ENCODE measurements at regions of chr3 and their contacts with region 1.

Region 1: DNA sequence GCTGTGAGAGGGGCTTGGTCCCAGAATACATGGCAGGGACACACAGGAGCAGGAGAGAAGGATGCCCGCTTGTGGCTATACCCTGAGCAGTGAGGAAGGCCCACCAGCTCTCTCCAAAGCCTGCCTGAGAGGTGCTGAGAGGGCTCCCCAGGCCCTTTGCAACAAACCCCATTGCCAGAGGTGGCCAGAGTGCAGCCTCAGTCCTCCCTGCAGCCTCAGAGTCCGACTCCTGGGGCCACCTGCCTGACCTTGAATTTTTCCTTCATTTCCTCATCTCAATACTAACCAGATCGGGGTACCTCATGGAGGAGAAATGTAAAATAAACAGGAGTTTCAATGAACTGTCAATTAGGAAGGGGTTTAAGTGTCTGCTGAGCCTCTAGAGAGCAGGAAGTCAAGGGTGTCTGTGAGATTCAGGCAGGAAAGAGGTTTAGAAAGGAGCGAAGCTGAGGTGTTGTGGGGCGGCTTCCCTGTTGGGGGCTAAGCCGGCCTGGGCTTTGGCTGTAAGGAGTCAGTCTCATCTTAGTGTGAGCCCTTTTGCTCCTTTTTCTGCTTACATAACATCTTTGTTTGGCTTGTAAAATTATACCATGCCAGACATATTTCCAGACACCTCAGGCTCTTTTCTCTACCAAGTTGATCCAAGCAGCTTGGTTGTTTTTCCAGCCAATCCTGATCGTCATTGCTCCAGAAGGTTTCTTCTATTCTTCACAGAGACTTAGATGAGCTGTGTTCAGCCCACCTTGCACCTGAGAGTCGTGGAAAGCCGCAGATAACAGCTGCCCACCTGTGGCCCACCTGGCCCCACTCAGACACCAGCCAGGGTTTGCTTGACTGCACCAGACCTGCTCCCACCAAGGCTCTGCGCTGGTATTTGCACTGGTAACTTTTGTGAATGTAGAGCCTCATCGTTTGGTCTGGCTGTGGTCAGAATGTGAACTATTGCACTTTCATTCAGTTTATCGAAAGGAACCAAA is 36.7 kb downstream of the CMTM7 start:
- DNase-seq: peak in 8 of 10 donors; percentile 21 to 68 (median 53)
- ATAC-seq: peak; percentile 56 to 63
- H3K4me3 Mint-ChIP-seq: peak overlapping the region; percentile 53 to 84 (median 77)
- H3K27ac Mint-ChIP-seq: peak overlapping the region; percentile 96 to 100 (median 98)
- H3K4me1 Mint-ChIP-seq: peaks cover 42 to 96% (median 95%) of the 10 kb centered on the region in 4 donors
- H3K27me3 Mint-ChIP-seq: no peaks in the 10 kb centered on the region

Region 2: GRCh38 chr3:32325957-32326356 is 102.4 kb before region 1 on chr3:
- POLR2A ChIA-PET with region 1: no interaction called
- DNase-seq: no peak
- ATAC-seq: no peak
- H3K4me3 Mint-ChIP-seq: no peak overlapping the region
- H3K27ac Mint-ChIP-seq: no peak overlapping the region
- H3K4me1 Mint-ChIP-seq: peaks cover 4 to 13% (median 8%) of the 10 kb centered on the region in 4 donors
- H3K27me3 Mint-ChIP-seq: no peaks in the 10 kb centered on the region

Region 3: DNA sequence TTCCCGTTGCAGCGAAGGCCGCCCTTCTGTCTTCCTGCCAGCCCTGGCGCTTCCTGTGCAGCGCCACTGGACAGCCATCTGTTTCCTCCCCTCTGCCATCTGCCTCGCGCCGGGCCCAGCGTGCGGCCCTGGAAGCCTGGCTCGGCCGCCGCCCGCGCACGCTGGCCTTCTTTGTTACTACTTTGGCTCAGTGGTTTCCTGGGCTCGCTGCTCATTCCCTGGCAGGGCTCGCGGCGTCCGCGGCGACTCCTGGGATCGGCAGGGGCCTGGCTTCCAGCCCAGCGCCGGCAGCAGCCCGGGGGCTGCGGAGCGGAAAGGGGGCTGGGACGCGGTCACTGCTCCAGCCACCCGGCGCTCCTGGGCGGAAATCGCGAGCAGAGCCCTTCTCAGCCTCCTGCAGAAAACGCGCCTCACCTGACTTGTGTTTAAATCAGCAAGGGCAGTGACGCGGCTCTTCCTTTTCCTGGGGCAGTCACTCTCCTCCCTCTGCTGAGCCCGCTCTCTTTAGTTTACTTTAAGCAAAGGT is 26.8 kb before region 1 on chr3:
- POLR2A ChIA-PET with region 1: interaction called, 23 read pairs
- DNase-seq: peak; percentile 37 to 81 (median 62)
- ATAC-seq: peak; percentile 70 to 78
- H3K4me3 Mint-ChIP-seq: peak overlapping the region; percentile 86 to 96 (median 94)
- H3K27ac Mint-ChIP-seq: peak overlapping the region; percentile 97 to 100 (median 99)
- H3K4me1 Mint-ChIP-seq: peaks cover 33 to 85% (median 83%) of the 10 kb centered on the region in 4 donors
- H3K27me3 Mint-ChIP-seq: no peaks in the 10 kb centered on the region

Region 4: DNA sequence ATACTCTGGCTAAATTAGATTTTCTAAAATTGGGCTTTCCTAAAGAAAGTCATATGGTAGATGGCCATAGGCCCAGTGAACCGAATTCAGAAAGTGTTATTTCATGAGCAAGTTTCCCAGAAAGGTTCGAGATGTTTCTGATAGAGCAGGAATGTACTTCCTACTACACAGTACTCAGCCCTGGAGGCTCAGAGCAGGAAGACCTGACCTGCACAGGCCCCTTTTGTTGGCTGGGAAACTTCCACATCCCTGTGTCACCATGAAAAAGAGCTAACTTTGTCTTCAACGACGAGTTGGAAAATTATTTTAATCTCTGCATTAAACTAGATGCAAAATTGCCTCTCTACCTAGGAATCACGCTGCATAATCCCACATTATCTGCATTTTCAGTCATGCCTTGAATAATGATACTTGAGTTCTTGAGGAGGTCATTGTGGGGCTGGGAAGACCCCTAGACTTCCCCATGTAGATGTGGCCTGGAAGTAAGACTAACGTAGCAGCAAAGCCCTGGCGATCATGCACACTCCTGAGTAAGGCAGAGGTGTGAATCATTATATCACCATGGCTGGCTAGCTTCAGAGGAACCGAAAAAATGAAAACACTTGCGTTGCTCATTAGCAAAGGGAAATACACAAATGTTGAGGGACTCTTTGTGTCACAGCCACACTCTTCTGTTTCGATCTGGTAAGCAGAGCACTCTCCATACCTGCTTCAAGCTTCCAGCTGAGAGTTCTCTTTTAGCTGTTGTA is 10.4 kb after region 1 on chr3:
- POLR2A ChIA-PET with region 1: interaction called, 23 read pairs
- DNase-seq: no peak
- ATAC-seq: peak; percentile 23 to 43
- H3K4me3 Mint-ChIP-seq: peak overlapping the region in 8 of 10 donors; percentile 2 to 74 (median 33)
- H3K27ac Mint-ChIP-seq: peak overlapping the region; percentile 44 to 91 (median 83)
- H3K4me1 Mint-ChIP-seq: peaks cover 27 to 89% (median 77%) of the 10 kb centered on the region in 4 donors
- H3K27me3 Mint-ChIP-seq: no peaks in the 10 kb centered on the region

Measured in naive thymus-derived CD8-positive, alpha-beta T cell (primary cell).